ENCODE measurements at regions of chr3 and their contacts with region 1.

Region 1: DNA sequence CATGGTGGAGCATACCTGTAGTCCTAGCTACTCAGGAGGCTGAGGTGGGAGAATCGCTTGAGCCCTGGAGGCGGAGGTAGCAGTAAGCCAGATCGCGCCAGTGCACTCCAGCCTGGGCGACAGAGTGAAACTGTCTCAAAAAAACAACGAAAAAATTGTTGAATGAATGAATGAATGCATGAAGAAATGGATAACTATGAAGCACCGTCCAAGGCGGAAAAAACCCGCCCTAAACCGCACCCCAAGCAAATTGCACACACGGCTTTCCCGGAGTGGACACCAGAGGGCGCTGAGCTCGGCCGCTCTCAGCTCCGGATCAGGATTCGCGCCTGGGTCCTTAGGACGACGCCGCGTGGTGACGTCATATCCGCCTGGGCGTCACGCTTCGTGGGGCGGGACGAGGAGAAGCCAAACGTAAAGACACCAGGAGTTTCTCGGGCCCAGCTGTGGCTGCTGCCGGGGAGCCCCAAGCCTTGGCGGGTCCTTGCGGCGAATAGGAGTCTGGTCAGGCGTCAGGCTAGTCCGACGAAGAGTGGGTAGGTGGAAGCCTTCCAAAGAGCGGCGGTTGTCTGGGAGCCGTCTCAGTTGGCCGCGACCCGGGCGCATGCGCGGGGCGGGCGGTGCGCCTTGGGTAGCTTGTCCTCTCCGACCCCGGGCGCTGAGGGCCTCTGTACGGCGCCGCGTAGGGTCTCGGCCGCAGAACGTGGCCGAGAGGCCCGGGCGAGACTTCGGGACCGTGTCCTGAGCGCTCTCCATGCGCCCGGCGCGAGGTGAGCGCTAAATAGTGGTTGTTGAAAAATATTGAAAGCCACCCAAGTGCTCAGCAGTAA is at the starts of genes HTD2 and RPP14:
- DNase-seq: peak; percentile 95
- H3K4me3 ChIP-seq: peak within 1 kb of the TSS; percentile 86 to 89 (median 87)
- H3K27ac ChIP-seq: peak within 1 kb of the TSS; percentile 85
- H3K4me1 ChIP-seq: peaks cover 17% of the 10 kb centered on the region
- H3K27me3 ChIP-seq: no peaks in the 10 kb centered on the region
- CTCF ChIP-seq: peak; percentile 93 to 98
- total RNA-seq, gene HTD2: 10.4 to 18.5 TPM
- total RNA-seq, gene RPP14: 15.5 to 22.1 TPM

Region 2: DNA sequence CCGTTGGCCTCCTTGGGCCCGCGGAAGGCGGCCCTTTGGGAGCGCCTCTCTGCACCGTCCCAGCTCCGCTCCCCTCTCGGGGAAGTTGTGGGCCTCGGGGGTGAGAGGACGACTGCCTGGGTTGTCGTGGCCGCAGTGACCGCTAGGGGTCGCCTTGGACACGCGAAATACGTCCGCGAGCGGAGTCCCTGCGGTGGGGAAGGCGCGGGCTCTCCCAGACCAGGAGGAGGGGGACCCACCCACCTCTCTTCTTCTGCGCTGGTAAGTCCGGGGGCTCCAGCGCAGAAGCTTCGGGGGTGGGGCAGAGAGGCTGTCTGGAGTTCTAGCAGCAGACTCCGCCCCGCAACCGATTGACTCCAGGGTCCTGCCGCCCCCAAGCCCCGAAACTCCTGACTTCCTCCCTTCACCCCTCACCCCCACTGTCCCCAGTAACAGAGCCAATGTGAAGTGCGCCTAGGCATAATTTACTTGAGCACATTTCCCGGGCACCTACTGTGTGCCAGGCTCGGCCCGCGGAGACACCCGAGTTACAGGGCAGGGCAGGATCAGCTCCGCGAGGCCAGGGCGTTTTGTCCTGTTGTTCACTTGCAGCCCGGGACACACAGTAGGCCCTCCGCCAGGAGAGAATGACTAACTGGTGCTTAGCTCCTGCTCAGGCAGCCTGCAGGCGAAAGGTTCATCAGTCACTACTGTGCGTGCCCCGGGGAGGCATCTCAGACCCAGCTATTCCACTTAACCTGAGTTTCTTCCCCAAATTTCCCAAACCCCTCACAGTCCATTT is 128.2 kb before region 1 on chr3:
- CTCF ChIA-PET with region 1: interaction called, 12 read pairs
- dilution Hi-C with region 1: no loop called
- in situ Hi-C with region 1: loop called in 1 of 2 experiments (anchors 10 kb)
- intact Hi-C with region 1: no loop called
- DNase-seq: peak; percentile 70
- H3K4me3 ChIP-seq: peak overlapping the region in 1 of 3 experiments; percentile 32
- H3K27ac ChIP-seq: no peak overlapping the region
- H3K4me1 ChIP-seq: peaks cover 61% of the 10 kb centered on the region
- H3K27me3 ChIP-seq: no peaks in the 10 kb centered on the region
- CTCF ChIP-seq: peak; percentile 53 to 95

Region 3: DNA sequence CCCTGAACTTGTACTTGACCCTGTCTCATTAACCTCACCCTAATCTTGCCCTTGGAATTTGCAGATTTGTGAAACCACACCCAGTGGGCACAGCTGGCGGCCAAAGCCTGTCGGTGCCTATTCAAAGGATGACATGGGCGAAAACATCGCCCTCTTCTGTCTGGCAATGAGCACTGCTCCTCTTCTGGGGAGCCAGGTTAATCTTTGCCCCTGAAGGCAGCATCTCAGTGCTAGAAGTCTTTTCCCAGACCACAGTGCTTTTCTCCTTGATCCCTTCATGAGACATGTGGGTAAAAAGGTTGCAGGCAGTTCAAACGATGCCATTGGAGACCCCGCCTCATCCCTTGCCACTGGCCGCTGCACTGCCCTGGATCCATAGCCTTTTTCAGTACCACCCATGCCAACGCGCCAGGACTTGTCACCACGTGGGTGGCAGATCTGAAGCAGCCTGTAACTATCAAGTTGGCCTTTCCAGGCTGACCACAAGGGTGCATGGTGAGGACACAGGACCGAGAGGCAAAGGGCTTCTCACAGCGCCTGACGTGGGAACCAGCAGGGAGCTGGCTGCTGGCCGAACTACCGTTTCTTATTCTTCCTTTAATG is 88.8 kb before region 1 on chr3:
- CTCF ChIA-PET with region 1: interaction called, 4 read pairs
- dilution Hi-C with region 1: no loop called
- in situ Hi-C with region 1: loop called in 1 of 2 experiments (anchors 5 kb)
- intact Hi-C with region 1: no loop called
- DNase-seq: peak; percentile 95
- H3K4me3 ChIP-seq: peak overlapping the region in 2 of 3 experiments; percentile 4 to 25
- H3K27ac ChIP-seq: peak overlapping the region; percentile 77
- H3K4me1 ChIP-seq: peaks cover 51% of the 10 kb centered on the region
- H3K27me3 ChIP-seq: no peaks in the 10 kb centered on the region
- CTCF ChIP-seq: peak; percentile 89 to 95

Region 4: DNA sequence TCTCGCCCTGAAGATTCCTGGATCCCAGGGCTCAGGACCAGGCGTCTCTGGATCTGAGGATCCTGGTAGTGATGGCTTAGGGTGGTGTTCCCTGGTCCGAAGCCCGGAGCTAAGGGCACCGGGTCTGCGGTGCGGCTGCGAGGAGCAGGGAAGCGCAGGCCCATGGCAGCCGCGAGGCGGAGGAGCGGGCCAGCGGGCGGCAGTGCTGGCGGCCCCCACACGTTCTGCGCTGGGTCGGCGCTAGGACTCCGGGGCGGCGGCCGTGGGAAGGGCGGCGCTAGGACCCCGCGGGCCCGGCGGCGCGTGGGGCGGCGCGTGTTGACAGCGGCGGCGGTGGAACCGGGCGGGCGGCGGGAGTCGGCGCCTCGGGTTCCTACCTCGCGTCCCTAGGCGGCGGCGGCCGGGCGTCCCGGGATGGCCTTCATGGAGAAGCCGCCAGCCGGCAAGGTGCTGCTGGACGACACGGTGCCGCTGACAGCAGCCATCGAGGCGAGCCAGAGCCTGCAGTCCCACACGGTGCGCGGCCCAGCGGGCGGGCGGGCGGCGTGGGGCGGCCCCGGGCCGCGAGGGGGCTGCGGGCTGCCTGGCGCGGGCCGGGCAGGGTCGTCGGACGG is 26.6 kb after region 1 on chr3 and contains the start of gene PXK:
- CTCF ChIA-PET with region 1: no interaction called
- dilution Hi-C with region 1: no loop called
- in situ Hi-C with region 1: no loop called
- intact Hi-C with region 1: loop called (anchors 1 kb)
- DNase-seq: peak; percentile 75
- H3K4me3 ChIP-seq: peak within 1 kb of the TSS; percentile 79 to 85 (median 84)
- H3K27ac ChIP-seq: no peak within 1 kb of the TSS
- H3K4me1 ChIP-seq: peaks cover 34% of the 10 kb centered on the region
- H3K27me3 ChIP-seq: no peaks in the 10 kb centered on the region
- CTCF ChIP-seq: peak in 1 of 2 donors; percentile 5
- total RNA-seq, gene PXK: 39.6 to 42.2 TPM

Region 5: GRCh38 chr3:58532794-58533220 is 226.7 kb after region 1 on chr3:
- CTCF ChIA-PET with region 1: no interaction called
- dilution Hi-C with region 1: no loop called
- in situ Hi-C with region 1: no loop called
- intact Hi-C with region 1: loop called (anchors 1 kb)
- DNase-seq: peak; percentile 56
- H3K4me3 ChIP-seq: no peak overlapping the region
- H3K27ac ChIP-seq: no peak overlapping the region
- H3K4me1 ChIP-seq: peaks cover 21% of the 10 kb centered on the region
- H3K27me3 ChIP-seq: no peaks in the 10 kb centered on the region
- CTCF ChIP-seq: peak; percentile 83 to 97

Region 6: GRCh38 chr3:58835086-58835485 is 529.0 kb after region 1 on chr3:
- CTCF ChIA-PET with region 1: interaction called, 11 read pairs
- dilution Hi-C with region 1: no loop called
- in situ Hi-C with region 1: no loop called
- intact Hi-C with region 1: no loop called
- DNase-seq: peak; percentile 52
- H3K4me3 ChIP-seq: no peak overlapping the region
- H3K27ac ChIP-seq: peak overlapping the region; percentile 13
- H3K4me1 ChIP-seq: peaks cover 11% of the 10 kb centered on the region
- H3K27me3 ChIP-seq: no peaks in the 10 kb centered on the region
- CTCF ChIP-seq: no peak